GM12878 (cell line): ENCODE measurements at regions of chr2 and their contacts with region 1.

Region 1: GRCh38 chr2:161063157-161063954 is 96.9 kb upstream of the TANK start:
- DNase-seq: peak; percentile 51
- ATAC-seq: peak; percentile 96
- H3K4me3 ChIP-seq: no peak overlapping the region
- H3K27ac ChIP-seq: no peak overlapping the region
- H3K4me1 ChIP-seq: no peaks in the 10 kb centered on the region; the same call in 1 of the 2 replicates
- H3K27me3 ChIP-seq: no peaks in the 10 kb centered on the region
- CTCF ChIP-seq: peak; percentile 88 to 91 (median 89)
- EP300 ChIP-seq: no peak
- POLR2A ChIP-seq: no peak
- RAD21 ChIP-seq: peak; percentile 84

Region 2: DNA sequence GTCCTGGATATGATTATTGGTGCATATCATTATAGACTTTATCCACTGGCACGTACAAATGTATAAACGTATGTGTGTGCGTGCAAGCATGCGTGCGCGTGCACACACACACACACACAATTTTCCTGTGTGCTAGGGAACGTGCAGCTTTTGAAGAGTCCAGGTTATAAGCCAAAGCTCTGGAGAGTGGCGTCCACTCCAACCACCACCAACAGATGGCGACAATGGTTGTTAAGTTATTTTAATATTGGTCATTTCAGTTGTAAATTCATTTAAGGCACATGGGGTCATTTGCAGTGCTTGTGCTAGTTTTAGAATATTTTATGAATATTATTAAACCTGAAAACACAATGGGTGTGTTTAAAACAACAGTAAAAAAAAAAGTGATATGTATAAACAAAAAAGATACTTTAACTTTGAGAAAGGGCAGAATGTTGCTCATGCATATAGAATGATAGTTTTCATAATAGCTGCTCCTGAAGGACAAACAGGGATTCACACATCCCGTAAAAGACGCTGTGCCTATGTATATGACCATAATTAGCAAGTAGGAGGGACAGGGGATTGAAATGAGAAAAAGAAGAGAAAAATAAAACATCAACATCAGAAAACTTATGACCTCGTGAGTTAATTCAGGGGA is 739.1 kb before region 1 on chr2:
- CTCF ChIA-PET with region 1: interaction called, 16 read pairs
- POLR2A ChIA-PET with region 1: no interaction called
- RAD21 ChIA-PET with region 1: interaction called, 13 read pairs
- SMC1A ChIA-PET with region 1: interaction called, 26 read pairs
- in situ Hi-C with region 1: no loop called
- intact Hi-C with region 1: loop called (anchors 5 kb)
- DNase-seq: no peak
- ATAC-seq: peak; percentile 82
- H3K4me3 ChIP-seq: no peak overlapping the region
- H3K27ac ChIP-seq: no peak overlapping the region
- H3K4me1 ChIP-seq: no peaks in the 10 kb centered on the region
- H3K27me3 ChIP-seq: no peaks in the 10 kb centered on the region; a peak in 1 of 4 replicates
- CTCF ChIP-seq: peak; percentile 60 to 72 (median 63)
- EP300 ChIP-seq: no peak
- POLR2A ChIP-seq: no peak
- RAD21 ChIP-seq: peak; percentile 64

Region 3: GRCh38 chr2:160994141-160995002 is 69.0 kb before region 1 on chr2:
- CTCF ChIA-PET with region 1: interaction called, 32 read pairs
- POLR2A ChIA-PET with region 1: no interaction called
- RAD21 ChIA-PET with region 1: interaction called, 12 read pairs
- SMC1A ChIA-PET with region 1: interaction called, 16 read pairs
- in situ Hi-C with region 1: no loop called
- intact Hi-C with region 1: no loop called
- DNase-seq: peak; percentile 28
- ATAC-seq: peak; percentile 90
- H3K4me3 ChIP-seq: no peak overlapping the region
- H3K27ac ChIP-seq: no peak overlapping the region
- H3K4me1 ChIP-seq: no peaks in the 10 kb centered on the region
- H3K27me3 ChIP-seq: no peaks in the 10 kb centered on the region
- CTCF ChIP-seq: peak; percentile 77 to 88 (median 78)
- EP300 ChIP-seq: no peak
- POLR2A ChIP-seq: no peak
- RAD21 ChIP-seq: peak; percentile 87

Region 4: DNA sequence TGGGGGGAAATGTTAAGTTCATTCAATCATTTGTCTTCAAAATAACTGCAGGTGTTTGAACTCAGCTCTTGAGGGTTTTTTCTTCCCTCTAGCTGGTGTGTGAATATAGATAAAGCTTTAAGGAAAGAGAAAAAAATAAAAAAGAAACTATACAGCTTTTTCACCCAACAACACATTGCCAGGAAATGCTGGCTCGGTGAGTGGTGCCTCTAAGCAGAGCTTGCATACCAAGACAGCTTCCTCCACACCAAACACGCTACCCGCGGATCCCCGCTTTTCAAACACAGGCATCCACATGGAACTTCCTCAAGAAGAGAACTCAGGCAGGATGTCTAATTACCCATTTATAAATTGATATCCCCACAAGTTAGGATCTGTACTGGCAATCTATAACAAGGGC is 27.1 kb after region 1 on chr2:
- CTCF ChIA-PET with region 1: interaction called, 47 read pairs
- POLR2A ChIA-PET with region 1: interaction called, 4 read pairs
- RAD21 ChIA-PET with region 1: interaction called, 10 read pairs
- SMC1A ChIA-PET with region 1: interaction called, 25 read pairs
- in situ Hi-C with region 1: no loop called
- intact Hi-C with region 1: no loop called
- DNase-seq: no peak
- ATAC-seq: peak; percentile 59
- H3K4me3 ChIP-seq: no peak overlapping the region
- H3K27ac ChIP-seq: peak overlapping the region; percentile 63
- H3K4me1 ChIP-seq: peaks cover 36% of the 10 kb centered on the region
- H3K27me3 ChIP-seq: no peaks in the 10 kb centered on the region
- CTCF ChIP-seq: no peak
- EP300 ChIP-seq: no peak
- POLR2A ChIP-seq: 0 out of 2 replicates have a peak, but pooled peaks have one; percentile 37
- RAD21 ChIP-seq: no peak

Region 5: DNA sequence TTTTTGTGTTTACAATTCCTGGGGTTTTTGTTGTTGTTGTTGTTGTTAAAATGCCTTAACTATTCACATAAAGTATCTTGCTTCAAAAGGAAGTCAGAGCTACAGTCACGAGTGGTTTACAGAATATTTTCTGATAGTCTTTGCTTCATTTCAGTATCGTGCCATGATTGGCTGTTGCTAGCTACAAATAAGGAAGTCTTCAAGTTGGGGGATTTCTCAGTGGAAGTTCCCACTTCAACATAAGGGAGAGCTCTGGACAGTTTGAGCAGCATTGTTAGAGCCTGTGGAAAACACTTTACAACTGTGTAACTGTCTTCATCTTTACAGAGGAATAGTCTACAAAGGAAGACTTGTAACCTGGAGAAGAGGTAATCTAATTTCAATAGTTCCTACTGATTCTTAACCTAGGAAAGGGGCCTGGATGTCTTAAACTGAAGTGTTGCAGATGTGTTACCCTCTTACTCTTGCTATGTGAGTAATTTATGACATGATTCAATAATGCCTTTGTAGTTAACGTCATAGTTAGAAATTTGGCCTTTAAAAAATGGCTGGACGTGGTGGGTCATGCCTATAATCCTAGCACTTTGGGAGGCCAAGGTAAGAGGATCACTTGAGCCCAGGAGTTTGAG is 73.5 kb after region 1 on chr2:
- CTCF ChIA-PET with region 1: interaction called, 25 read pairs
- POLR2A ChIA-PET with region 1: no interaction called
- RAD21 ChIA-PET with region 1: interaction called, 19 read pairs
- SMC1A ChIA-PET with region 1: interaction called, 26 read pairs
- in situ Hi-C with region 1: no loop called
- intact Hi-C with region 1: no loop called
- DNase-seq: peak; percentile 87
- ATAC-seq: peak; percentile 80
- H3K4me3 ChIP-seq: peak overlapping the region; percentile 81
- H3K27ac ChIP-seq: peak overlapping the region; percentile 95
- H3K4me1 ChIP-seq: no peaks in the 10 kb centered on the region
- H3K27me3 ChIP-seq: no peaks in the 10 kb centered on the region
- CTCF ChIP-seq: no peak
- EP300 ChIP-seq: no peak; a peak in 1 of 4 replicates
- POLR2A ChIP-seq: peak; percentile 56
- RAD21 ChIP-seq: no peak

Region 6: DNA sequence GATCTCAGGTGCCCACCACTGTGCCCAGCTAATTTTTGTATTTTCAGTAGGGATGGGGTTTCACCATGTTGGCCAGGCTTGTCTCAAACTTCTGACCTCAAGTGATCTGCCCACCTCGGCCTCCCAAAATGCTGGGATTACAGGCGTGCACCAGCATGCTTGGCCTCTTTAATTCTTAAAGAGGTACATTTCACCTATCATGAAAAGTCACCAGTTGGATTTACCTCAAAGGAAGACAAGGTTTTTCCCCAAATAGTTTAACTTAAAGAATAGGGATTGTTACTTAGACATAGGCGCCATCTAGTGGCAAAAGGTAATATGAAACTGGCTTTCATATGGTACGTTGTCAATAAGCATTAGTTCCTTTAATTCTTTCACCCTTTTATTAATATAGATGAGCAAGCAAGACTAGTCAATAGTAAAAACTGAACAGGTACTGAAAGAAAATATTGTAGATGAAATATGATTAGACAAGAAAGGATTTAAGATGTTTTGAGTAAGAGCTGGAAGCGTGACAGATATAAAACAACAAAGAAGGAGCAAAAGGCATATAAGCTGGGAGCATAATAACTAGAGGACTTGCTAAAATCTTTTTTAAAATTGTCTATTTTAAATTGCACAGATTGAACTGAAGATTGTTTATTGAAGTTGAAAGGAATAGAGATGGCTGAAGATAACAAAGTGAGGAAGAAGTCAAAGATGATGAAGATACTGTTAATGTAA is 209.8 kb after region 1 on chr2:
- CTCF ChIA-PET with region 1: interaction called, 23 read pairs
- POLR2A ChIA-PET with region 1: no interaction called
- RAD21 ChIA-PET with region 1: interaction called, 13 read pairs
- SMC1A ChIA-PET with region 1: interaction called, 10 read pairs
- in situ Hi-C with region 1: no loop called
- intact Hi-C with region 1: loop called (anchors 5 kb)
- DNase-seq: peak; percentile 23
- ATAC-seq: peak; percentile 90
- H3K4me3 ChIP-seq: no peak overlapping the region
- H3K27ac ChIP-seq: no peak overlapping the region
- H3K4me1 ChIP-seq: no peaks in the 10 kb centered on the region
- H3K27me3 ChIP-seq: no peaks in the 10 kb centered on the region
- CTCF ChIP-seq: peak; percentile 45 to 66 (median 57); a peak in 5 of 6 replicates
- EP300 ChIP-seq: no peak
- POLR2A ChIP-seq: no peak
- RAD21 ChIP-seq: peak; percentile 82